GM18951 (cell line): ENCODE measurements at regions of chr13 and their contacts with region 1.

Region 1: DNA sequence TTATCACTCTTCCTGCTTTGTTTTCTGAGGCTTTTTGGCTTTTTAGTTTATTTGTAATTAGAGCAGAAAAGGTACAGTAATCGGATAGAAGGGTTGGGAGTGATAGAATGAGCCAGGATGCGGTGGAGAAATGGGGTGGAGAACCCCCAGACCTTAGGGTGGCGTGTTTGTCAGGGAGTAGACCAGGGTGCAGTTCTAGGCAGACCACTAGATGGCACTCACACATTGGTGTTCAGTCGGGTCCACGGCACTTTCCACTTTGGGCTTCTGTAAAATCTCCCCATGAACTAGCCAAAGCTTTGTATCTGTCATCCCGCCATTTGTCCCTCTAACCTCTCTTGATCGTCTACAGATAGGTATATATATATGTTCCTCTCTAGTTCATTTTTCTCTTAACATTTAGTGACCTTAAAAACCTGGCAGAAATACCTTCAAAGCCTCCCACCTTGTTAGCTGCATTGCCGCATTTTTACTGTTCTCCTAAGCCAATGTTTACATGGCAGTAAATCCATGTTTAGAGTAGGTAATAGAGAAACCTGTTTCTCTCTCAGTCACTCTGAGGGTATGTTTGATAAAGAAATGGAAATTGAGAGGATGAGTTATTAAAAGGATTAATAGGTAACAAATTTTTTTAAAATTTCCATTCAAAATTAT is 154.9 kb downstream of the TM9SF2 start:
- POLR2A ChIP-seq: no peak

Region 2: GRCh38 chr13:99374994-99375737 is 281.1 kb before region 1 on chr13:
- in situ Hi-C with region 1: no loop called
- POLR2A ChIP-seq: no peak

Region 3: DNA sequence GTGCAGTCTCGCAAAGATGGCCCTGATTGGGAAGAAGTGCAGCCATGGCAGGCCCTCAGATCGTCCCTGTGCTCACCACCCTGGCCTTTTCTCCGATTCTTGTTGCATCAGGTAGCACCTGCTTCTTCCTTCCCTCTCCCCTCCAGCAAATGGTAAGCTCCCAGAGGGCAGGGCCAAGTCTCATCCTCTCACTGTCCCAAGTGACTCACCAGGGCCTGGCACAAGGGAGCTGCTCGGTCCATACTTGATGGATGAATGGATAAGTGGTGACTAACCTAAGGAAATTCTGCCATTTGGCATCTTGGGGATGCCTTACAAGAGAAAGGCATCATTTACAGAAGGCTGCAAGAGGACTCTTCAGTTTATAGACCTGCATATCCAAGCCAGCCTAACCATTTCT is 230.5 kb after region 1 on chr13:
- in situ Hi-C with region 1: loop called (anchors 10 kb)
- POLR2A ChIP-seq: no peak

Region 4: GRCh38 chr13:100235311-100235901 is 579.2 kb after region 1 on chr13:
- in situ Hi-C with region 1: loop called (anchors 25 kb)
- POLR2A ChIP-seq: no peak

Region 5: GRCh38 chr13:100514788-100515409 is 858.7 kb after region 1 on chr13:
- in situ Hi-C with region 1: loop called (anchors 25 kb)
- POLR2A ChIP-seq: no peak